ENCODE measurements at regions of chr5 and their contacts with region 1.

Region 1: DNA sequence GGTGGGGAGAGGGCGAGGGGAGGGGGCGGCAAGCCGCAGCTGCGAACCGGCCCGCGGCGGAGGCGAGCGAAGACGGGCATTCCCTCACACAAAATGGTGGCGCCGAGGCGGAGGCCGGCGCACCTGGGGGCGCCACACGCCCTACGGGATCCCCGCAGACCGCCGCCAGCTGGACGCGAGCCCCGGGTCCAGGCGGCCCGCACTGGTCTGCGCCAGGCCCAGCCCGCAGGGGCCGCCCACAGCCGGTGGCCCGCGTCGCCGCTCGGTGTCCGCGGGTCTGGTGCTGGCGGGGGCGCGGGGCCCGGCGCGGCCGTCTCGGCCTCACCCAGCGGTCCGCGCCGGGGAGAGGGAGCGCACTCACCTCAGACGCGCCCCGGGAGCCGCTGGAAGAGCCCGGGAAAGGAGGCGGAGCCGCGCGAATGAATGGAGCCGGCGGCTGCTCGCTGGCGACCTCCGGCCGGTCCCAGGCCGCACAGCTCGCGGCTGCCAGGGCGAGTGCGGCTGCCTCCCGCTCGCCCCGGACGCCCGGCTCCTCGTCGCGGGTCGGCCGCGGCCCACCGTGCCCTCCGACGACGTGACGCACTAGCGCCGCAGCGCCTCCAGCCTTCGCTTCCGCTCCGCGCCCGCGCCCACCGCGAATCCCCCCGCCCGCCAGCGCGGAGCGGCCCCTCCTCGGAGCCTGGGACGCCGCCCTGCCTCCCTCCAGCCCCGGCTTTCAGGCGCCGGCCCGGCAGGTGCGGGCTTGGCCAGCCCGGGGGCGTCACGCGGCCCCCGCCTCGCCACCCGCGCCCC is at the start of gene FAM169A:
- DNase-seq: peak; percentile 57
- ATAC-seq: peak; percentile 77
- H3K4me3 Mint-ChIP-seq: peak within 1 kb of the TSS; percentile 87
- H3K27ac Mint-ChIP-seq: peak within 1 kb of the TSS; percentile 80
- H3K4me1 Mint-ChIP-seq: peaks cover 17% of the 10 kb centered on the region
- H3K27me3 Mint-ChIP-seq: peaks cover 27% of the 10 kb centered on the region
- CTCF ChIP-seq: no peak
- total RNA-seq, gene FAM169A: 8.2 TPM in 2 replicates

Region 2: GRCh38 chr5:73262991-73263710 is 1602.8 kb before region 1 on chr5:
- CTCF ChIA-PET with region 1: no interaction called
- POLR2A ChIA-PET with region 1: interaction called, 14 read pairs
- intact Hi-C with region 1: no loop called
- DNase-seq: no peak
- ATAC-seq: no peak
- H3K4me3 Mint-ChIP-seq: no peak overlapping the region
- H3K27ac Mint-ChIP-seq: no peak overlapping the region
- H3K4me1 Mint-ChIP-seq: no peaks in the 10 kb centered on the region
- H3K27me3 Mint-ChIP-seq: peaks cover 10% of the 10 kb centered on the region
- CTCF ChIP-seq: no peak

Measured in activated B cell treated with CpG ODN at 0.5 μM for 24 hours (primary cell).